ENCODE measurements at regions of chr9 and their contacts with region 1.

Region 1: GRCh38 chr9:122931226-122932121 is at the start of gene ZBTB26:
- H3K4me3 ChIP-seq: peak within 1 kb of the TSS; percentile 84
- H3K27ac ChIP-seq: peak within 1 kb of the TSS; percentile 73
- H3K4me1 ChIP-seq: no peaks in the 10 kb centered on the region; the same call in 1 of the 2 replicates
- CTCF ChIP-seq: no peak

Region 2: GRCh38 chr9:122904823-122905710 is 26.4 kb before region 1 on chr9 and contains the start of gene RC3H2:
- CTCF ChIA-PET with region 1: interaction called, 3 read pairs
- POLR2A ChIA-PET with region 1: interaction called, 34 read pairs
- H3K4me3 ChIP-seq: peak within 1 kb of the TSS; percentile 94
- H3K27ac ChIP-seq: peak within 1 kb of the TSS; percentile 81
- H3K4me1 ChIP-seq: 0 out of 2 replicates have a peak, but pooled peaks cover 3% of the 10 kb centered on the region
- CTCF ChIP-seq: no peak

Region 3: GRCh38 chr9:122912964-122913673 is 18.4 kb before region 1 on chr9 and contains the start of gene ZBTB6:
- CTCF ChIA-PET with region 1: interaction called, 3 read pairs
- POLR2A ChIA-PET with region 1: interaction called, 40 read pairs
- H3K4me3 ChIP-seq: peak within 1 kb of the TSS; percentile 97
- H3K27ac ChIP-seq: peak within 1 kb of the TSS; percentile 65
- H3K4me1 ChIP-seq: no peaks in the 10 kb centered on the region
- CTCF ChIP-seq: no peak

Region 4: DNA sequence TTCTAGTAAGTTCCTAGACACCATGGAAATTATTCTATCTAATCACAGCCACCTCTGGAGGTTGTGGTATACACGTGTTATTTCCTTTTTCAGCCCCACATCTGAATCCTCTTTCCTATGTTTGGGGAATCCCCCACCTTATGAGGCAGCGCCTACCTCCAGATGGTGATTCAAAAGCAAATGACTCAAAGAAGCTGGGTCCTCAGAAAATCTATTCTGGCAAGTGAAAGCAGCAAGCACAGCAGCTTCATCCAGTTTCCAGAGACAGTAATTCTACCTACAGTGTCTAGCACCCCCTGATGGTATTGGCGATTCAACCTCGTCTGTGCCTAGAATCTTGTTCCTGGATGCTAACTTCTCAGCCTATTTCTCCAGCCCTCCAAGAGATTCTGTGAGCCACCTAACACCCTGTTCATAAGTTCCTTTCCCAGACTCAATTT is 293.9 kb after region 1 on chr9:
- CTCF ChIA-PET with region 1: no interaction called
- POLR2A ChIA-PET with region 1: no interaction called
- H3K4me3 ChIP-seq: no peak overlapping the region
- H3K27ac ChIP-seq: no peak overlapping the region
- H3K4me1 ChIP-seq: no peaks in the 10 kb centered on the region
- CTCF ChIP-seq: no peak; the same call in 1 of the 2 replicates

Measured in HEK293 (cell line).